ENCODE measurements at regions of chr12 and their contacts with region 1.

Region 1: DNA sequence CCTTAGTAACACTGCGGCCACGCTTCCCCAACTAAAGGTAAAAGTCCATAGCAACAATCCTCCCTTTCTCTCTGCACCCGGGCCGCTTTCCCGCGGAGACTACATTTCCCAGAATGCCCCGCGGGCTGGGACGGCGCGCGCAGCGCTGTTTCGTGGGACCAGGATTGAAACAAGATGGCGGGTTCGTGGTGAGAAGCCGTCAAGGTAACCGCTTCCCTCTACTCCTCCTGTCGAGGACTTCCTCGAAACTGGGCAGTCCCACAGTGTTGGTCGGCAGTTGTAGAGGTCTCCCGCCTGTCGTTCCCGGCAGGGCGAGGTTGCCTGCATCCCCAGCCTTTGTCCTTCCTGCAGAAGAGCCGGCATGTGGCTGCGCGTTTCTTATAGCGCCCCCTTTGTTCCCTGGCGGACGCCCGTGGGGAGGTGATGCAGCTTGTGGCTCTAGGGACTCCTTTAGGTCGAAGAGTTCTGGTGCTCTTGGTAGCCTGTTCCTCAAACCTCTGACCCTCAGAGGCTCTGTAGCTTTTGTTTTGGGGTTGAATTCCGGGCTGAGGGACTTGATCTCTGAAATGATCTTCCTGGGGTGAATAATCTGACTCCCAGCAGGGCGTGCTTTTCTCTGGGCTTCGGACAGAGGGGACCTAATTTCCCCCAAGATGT is at the start of gene MRPL42:
- DNase-seq: peak; percentile 70 to 98
- H3K4me3 ChIP-seq: peak within 1 kb of the TSS; percentile 84 to 99 (median 94)
- H3K27ac ChIP-seq: peak within 1 kb of the TSS; percentile 98
- H3K4me1 ChIP-seq: no peaks in the 10 kb centered on the region
- H3K27me3 ChIP-seq: no peaks in the 10 kb centered on the region
- CTCF ChIP-seq: peak; percentile 40 to 57 (median 47)
- EP300 ChIP-seq: no peak
- POLR2A ChIP-seq: peak; percentile 79 to 97
- RAD21 ChIP-seq: peak; percentile 20 to 21; a peak in 3 of 4 replicates
- total RNA-seq, gene MRPL42: 171 and 176 TPM in 2 replicates

Region 2: DNA sequence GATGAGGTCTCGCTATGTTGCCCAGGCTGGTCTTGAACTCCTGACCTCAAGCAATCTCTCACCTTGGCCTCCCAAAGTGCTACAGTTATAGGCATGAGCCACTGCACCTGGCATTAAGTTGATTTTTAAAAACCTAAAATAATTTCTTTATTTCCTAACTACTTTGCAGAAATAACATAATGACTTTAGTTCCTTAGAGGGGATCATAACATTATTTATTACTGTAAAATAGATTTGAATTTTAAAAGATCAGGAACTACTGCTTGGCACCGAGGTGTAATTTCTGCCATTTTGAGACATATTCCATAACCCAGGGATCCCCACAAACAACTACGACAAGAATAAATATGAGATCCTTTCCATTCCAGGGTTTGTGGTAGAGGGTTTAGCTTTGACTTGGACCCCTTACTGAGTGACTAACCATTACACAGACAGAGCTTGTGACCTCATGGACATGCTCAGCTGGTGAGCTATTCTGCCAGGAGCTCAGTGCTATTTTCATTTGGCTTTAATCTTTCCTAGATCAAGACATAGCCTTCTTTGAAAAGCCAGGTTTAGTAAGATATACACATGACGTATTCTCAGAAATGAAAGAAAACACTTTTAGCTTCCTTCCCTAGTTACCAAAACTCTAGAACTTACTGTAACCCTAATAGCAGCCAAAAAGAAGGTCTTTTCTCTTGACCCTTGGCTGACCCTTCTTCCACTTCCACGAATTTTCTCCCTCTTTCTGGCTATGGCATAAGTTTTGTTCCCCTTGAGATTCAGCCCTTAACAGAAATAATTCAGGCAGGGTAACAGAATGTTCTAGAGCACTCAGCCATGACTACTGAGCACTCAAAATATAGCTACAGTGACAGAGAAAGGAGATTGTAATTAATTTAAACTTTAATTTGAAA is 164.9 kb before region 1 on chr12:
- CTCF ChIA-PET with region 1: no interaction called
- POLR2A ChIA-PET with region 1: no interaction called
- DNase-seq: no peak
- H3K4me3 ChIP-seq: no peak overlapping the region
- H3K27ac ChIP-seq: no peak overlapping the region
- H3K4me1 ChIP-seq: no peaks in the 10 kb centered on the region
- H3K27me3 ChIP-seq: no peaks in the 10 kb centered on the region
- CTCF ChIP-seq: no peak
- EP300 ChIP-seq: no peak
- POLR2A ChIP-seq: no peak
- RAD21 ChIP-seq: no peak

Region 3: DNA sequence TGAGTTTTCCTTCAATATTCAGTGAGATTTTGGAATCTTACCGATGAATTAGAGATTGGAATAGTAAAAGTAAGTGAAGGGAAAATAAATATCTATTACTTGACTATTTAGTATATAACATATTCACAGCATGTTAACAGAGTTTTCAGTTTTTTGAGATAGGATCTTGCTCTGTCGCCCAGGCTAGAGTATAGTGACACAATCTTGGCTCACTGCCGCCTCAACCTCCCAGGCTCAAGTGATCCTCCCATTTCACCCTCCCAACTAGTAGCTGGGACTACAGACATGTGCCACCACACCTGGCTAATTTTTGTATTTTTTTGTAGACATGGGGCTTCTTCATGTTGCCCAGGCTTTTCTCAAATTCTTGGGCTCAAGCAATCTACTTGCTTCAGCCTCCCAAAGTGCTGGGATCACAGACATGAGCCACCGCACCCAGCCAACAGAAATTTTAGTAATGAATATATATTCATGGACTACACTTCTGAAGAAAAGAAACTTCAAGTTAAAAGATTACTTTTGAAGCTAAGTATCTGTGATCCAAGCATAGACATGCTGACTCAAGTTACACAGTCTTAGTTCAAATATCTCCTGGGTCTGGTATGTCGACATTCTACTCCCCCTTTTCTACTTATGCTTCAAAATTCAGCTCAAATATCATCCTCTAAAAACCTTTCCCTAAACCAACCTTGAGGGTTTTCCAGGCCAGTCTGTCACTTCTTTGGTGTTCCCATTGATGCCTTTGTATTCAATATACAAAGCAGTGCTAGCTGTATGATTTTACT is 39.5 kb before region 1 on chr12:
- CTCF ChIA-PET with region 1: no interaction called
- POLR2A ChIA-PET with region 1: no interaction called
- DNase-seq: no peak
- H3K4me3 ChIP-seq: no peak overlapping the region
- H3K27ac ChIP-seq: no peak overlapping the region
- H3K4me1 ChIP-seq: peaks cover 0 to 6% (median 5%) of the 10 kb centered on the region in 4 experiments; a peak in 6 of 7 replicates
- H3K27me3 ChIP-seq: no peaks in the 10 kb centered on the region
- CTCF ChIP-seq: no peak
- EP300 ChIP-seq: no peak
- POLR2A ChIP-seq: no peak
- RAD21 ChIP-seq: no peak

Region 4: DNA sequence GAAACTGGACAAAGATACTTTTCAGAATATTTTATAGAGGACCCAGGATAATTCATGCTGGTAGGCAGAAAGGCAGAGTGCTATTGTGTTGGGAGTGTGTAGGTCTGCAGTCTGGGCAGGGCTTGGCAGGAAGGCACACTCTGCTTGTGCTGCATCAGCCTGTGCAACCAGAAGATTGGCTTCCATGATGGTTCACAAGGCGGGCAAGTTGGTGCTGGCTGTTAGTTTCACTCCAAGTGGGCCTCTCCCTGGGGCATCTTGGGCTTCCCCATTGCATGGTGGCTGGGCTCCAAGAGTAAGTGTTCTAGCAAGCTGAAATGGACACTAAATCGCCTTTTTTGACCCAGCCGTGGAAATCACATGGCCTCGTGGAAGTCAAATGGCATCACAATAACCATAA is 23.9 kb before region 1 on chr12:
- CTCF ChIA-PET with region 1: interaction called, 3 read pairs
- POLR2A ChIA-PET with region 1: interaction called, 12 read pairs
- DNase-seq: no peak
- H3K4me3 ChIP-seq: no peak overlapping the region
- H3K27ac ChIP-seq: no peak overlapping the region
- H3K4me1 ChIP-seq: peaks cover 0 to 9% (median 3%) of the 10 kb centered on the region in 4 experiments; a peak in 2 of 7 replicates
- H3K27me3 ChIP-seq: no peaks in the 10 kb centered on the region
- CTCF ChIP-seq: no peak
- EP300 ChIP-seq: no peak
- POLR2A ChIP-seq: no peak
- RAD21 ChIP-seq: no peak

Region 5: DNA sequence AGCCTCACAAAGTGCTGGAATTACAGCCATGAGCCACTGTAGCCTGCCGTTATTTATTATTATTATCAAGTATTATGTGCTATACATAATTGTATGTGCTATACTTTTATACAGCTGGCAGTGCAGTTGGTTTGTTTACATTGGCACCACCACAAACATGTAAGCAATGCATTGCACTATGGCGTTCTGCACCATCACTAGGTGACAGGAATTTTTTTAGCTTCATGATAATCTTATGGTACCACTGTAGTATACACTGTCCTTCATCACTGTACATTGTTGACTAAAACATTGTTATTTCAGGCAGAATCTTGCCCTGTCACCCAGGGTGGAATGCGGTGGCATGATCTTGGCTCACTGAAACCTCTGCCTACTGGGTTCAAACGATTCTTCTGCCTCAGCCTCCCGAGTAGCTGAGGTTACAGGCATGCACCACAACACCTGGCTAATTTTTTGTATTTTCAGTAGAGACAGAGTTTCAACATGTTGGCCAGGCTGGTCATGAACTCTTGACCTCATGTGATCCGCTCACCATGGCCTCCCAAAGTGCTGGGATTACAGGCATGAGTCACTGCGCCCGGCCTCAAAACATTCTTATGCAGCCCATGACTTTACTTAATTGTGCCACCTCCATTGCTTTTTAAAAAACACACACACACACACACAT is 17.0 kb after region 1 on chr12:
- CTCF ChIA-PET with region 1: interaction called, 5 read pairs
- POLR2A ChIA-PET with region 1: interaction called, 12 read pairs
- DNase-seq: no peak
- H3K4me3 ChIP-seq: no peak overlapping the region
- H3K27ac ChIP-seq: no peak overlapping the region
- H3K4me1 ChIP-seq: no peaks in the 10 kb centered on the region
- H3K27me3 ChIP-seq: no peaks in the 10 kb centered on the region
- CTCF ChIP-seq: no peak
- EP300 ChIP-seq: no peak
- POLR2A ChIP-seq: no peak
- RAD21 ChIP-seq: no peak

Measured in H1 (cell line).